ENCODE measurements at regions of chr15 and their contacts with region 1.

Region 1: DNA sequence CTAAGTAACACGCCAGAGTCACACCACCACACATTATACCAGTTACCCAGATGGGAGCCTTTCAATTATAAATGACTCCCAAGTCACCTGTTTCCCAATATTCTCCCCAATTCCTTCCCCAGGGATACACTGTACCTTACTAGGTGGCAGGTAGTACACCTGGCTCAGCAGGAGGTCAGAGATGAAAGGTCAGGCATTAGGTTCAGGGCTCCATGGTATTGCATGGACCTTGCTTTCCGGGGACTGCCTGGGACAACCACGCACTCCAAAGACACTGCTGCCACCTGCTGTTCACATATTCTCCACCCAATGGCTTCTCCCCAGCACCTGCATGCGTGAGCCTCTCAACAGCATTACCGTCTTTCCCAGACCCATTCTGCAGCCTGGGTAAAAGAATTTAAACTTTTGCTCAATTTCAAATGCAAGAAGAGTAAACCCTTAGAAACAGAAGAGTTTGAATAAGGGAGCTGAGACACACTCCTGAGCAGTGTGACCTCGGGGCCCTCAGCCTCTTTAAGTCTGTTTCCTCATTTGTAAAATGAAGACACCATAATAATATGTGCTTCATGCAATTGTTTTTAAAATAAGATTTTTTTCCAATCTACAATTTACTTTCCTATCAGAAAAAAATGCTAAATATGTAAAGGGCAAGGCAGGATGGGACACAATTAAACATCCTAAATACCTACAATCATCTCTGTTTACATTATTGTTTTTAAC is 28.0 kb upstream of the LACTB start:
- DNase-seq: peak in 34 of 35 experiments; percentile 28 to 81 (median 57)
- ATAC-seq: peak; percentile 85 to 97 (median 92)
- H3K4me3 ChIP-seq: no peak overlapping the region
- H3K4me3 Mint-ChIP-seq: no peak overlapping the region
- H3K27ac ChIP-seq: no peak overlapping the region
- H3K27ac Mint-ChIP-seq: no peak overlapping the region
- H3K4me1 ChIP-seq: no peaks in the 10 kb centered on the region
- H3K4me1 Mint-ChIP-seq: peaks cover 0 to 6% (median 5%) of the 10 kb centered on the region in 3 donors
- H3K27me3 ChIP-seq: peaks cover 0 to 10% of the 10 kb centered on the region in 2 experiments
- H3K27me3 Mint-ChIP-seq: peaks cover 0 to 4% of the 10 kb centered on the region in 2 donors

Region 2: GRCh38 chr15:63048115-63048775 is 45.4 kb before region 1 on chr15:
- CTCF ChIA-PET with region 1: interaction called, 9 to 18 read pairs
- POLR2A ChIA-PET with region 1: no interaction called
- DNase-seq: peak; percentile 64 to 92 (median 81)
- ATAC-seq: peak; percentile 84 to 87 (median 85)
- H3K4me3 ChIP-seq: peak overlapping the region; percentile 66 to 95
- H3K4me3 Mint-ChIP-seq: peak overlapping the region; percentile 92 to 95 (median 94)
- H3K27ac ChIP-seq: peak overlapping the region; percentile 25
- H3K27ac Mint-ChIP-seq: peak overlapping the region in 1 of 2 donors; percentile 72
- H3K4me1 ChIP-seq: peaks cover 4 to 21% of the 10 kb centered on the region in 2 experiments
- H3K4me1 Mint-ChIP-seq: peaks cover 19 to 31% (median 27%) of the 10 kb centered on the region in 3 donors
- H3K27me3 ChIP-seq: peaks cover 4 to 23% of the 10 kb centered on the region in 2 experiments
- H3K27me3 Mint-ChIP-seq: peaks cover 31 to 40% of the 10 kb centered on the region in 2 donors

Measured in T-cell (primary cell).